ENCODE measurements at regions of chr7 and their contacts with region 1.

Region 1: GRCh38 chr7:83166781-83167180 is 4.1 kb upstream of the PCLO start:
- DNase-seq: no peak
- H3K4me3 ChIP-seq: no peak overlapping the region
- H3K27ac ChIP-seq: no peak overlapping the region
- H3K4me1 ChIP-seq: peaks cover 0 to 8% (median 4%) of the 10 kb centered on the region in 4 donors
- H3K27me3 ChIP-seq: peaks cover 3% of the 10 kb centered on the region
- CTCF ChIP-seq: no peak
- EP300 ChIP-seq: no peak
- POLR2A ChIP-seq: no peak

Region 2: GRCh38 chr7:82677493-82677892 is 489.3 kb before region 1 on chr7:
- in situ Hi-C with region 1: no loop called
- intact Hi-C with region 1: no loop called
- DNase-seq: peak; percentile 11
- H3K4me3 ChIP-seq: no peak overlapping the region
- H3K27ac ChIP-seq: no peak overlapping the region
- H3K4me1 ChIP-seq: peaks cover 0 to 12% (median 4%) of the 10 kb centered on the region in 4 donors
- H3K27me3 ChIP-seq: no peaks in the 10 kb centered on the region
- CTCF ChIP-seq: no peak
- EP300 ChIP-seq: no peak
- POLR2A ChIP-seq: no peak

Region 3: GRCh38 chr7:83212883-83213282 is 46.1 kb after region 1 on chr7:
- in situ Hi-C with region 1: no loop called
- intact Hi-C with region 1: loop called (anchors 2 kb)
- DNase-seq: no peak
- H3K4me3 ChIP-seq: no peak overlapping the region
- H3K27ac ChIP-seq: no peak overlapping the region
- H3K4me1 ChIP-seq: no peaks in the 10 kb centered on the region
- H3K27me3 ChIP-seq: no peaks in the 10 kb centered on the region
- CTCF ChIP-seq: no peak
- EP300 ChIP-seq: no peak
- POLR2A ChIP-seq: no peak

Region 4: DNA sequence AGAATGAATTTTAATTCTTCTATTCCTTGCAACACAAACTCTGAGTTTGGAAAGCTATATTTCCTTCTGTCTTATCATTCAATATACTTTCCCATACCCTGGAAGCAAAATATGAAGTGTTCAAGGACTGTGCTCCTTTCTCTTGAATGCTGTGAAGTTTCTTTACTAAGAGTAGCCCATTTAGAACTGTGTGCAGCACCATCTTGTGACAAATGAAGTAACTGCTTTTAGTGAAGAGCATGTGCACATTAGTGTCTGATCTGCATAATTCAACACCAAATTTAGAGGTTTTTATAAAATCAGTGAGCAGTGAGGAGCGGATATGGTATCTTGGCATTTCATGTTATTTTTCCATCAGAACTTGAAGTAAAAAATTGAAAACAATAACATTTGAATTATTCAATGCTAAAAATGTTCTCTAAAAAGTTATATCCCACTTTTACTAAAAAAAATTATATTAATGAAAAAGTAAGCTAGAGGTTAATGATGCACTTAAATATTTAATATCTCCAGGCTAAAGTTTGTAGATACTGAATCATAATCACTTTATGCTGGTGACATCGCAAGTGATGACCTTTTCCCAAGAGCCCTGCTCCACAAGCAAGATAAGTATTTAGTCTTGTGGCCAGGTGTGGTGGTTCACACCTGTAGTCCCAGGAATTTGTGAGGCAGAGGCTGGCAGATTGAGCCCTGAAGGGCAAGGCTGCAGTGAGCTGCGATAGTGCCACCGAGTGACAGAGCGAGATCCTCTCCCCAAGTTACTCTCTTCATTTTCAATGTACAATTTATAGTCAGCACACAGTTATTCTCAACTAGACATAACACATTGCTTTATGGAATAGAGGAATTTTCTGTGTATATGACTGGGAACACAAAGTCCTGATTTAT is 104.7 kb after region 1 on chr7:
- in situ Hi-C with region 1: no loop called
- intact Hi-C with region 1: no loop called
- DNase-seq: no peak
- H3K4me3 ChIP-seq: no peak overlapping the region
- H3K27ac ChIP-seq: no peak overlapping the region
- H3K4me1 ChIP-seq: peaks cover 0 to 14% (median 7%) of the 10 kb centered on the region in 4 donors
- H3K27me3 ChIP-seq: no peaks in the 10 kb centered on the region
- CTCF ChIP-seq: peak; percentile 20 to 36 (median 25)
- EP300 ChIP-seq: no peak
- POLR2A ChIP-seq: no peak

Measured in transverse colon (tissue), 4 donors.